Naive thymus-derived CD4-positive, alpha-beta T cell (primary cell): ENCODE measurements at regions of chr9 and their contacts with region 1.

Region 1: DNA sequence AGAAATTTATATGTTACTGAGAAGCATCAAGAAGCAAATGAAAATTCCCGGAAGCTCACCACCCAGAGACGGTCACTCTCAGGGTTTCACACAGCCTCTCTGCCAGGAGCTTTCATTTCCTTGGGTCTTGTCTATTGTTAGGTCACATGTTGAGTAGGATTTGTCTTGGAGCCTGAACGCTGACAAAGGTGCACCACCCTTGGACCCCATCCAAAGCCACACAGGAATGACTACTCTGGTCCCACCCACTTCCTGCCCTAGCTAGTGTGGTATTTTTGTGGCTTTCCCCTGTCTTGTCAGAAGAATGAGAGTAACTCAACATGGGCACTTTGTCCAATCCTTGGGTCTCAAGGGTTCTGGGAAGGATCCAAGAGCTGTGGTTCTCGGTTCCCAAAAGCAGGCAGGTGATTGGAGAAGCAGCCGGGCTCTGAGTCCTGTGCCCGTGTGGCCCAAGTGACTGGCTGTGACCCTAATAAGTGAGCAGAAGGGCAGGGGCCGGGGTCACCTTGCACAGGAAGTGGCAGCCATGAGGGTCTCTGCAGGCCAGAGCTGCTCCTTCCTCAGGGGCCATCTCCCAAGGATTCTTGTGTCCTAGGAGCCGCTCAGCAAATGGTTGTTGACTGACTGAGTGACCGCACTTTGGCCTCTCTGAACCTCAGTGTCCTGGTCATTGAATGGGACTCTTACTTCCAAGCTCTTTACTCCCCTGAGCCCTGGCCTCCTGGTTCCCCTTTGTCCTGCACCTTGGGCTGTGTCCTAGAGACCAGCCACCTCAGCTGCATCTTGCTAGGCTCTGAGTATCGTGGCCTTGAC is 6.9 kb downstream of the FGD3 start:
- DNase-seq: peak in 8 of 9 donors; percentile 67 to 92 (median 90)
- ATAC-seq: peak; percentile 93
- H3K4me3 ChIP-seq: peak overlapping the region; percentile 55
- H3K4me3 Mint-ChIP-seq: peak overlapping the region; percentile 79 to 99 (median 86)
- H3K27ac ChIP-seq: peak overlapping the region; percentile 84
- H3K27ac Mint-ChIP-seq: peak overlapping the region; percentile 91 to 100 (median 98)
- H3K4me1 ChIP-seq: peaks cover 52 to 88% of the 10 kb centered on the region in 2 donors
- H3K4me1 Mint-ChIP-seq: peaks cover 58 to 92% (median 84%) of the 10 kb centered on the region in 7 donors
- H3K27me3 ChIP-seq: no peaks in the 10 kb centered on the region
- H3K27me3 Mint-ChIP-seq: peaks cover 0 to 2% (median 0%) of the 10 kb centered on the region in 5 donors

Region 2: DNA sequence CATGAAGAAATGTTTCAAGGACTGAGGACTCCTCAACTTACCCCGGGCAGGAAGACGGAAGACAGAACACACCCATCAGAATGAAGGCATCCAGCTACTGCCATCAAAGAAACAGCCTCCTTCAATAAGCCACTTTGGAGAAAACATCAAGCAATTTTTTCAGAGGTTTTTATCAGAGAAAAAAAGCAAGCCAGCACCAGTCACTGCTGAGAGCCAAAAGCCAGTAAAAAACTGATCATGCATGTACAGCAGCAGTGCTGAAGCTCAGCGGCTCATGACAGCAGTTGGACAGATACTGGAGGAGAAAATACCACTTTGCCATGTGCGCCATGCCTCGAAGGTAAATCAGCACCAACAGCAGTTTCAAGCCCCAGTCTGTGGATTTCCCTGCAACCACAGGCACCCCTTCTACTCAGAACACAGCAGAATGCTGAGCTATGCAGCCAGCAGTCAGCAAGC is 66.3 kb before region 1 on chr9:
- CTCF ChIA-PET with region 1: interaction called, 4 read pairs
- POLR2A ChIA-PET with region 1: interaction called, 25 read pairs
- intact Hi-C with region 1: loop called in 1 of 2 experiments (anchors 2 kb)
- DNase-seq: peak in 7 of 9 donors; percentile 60 to 79 (median 67)
- ATAC-seq: peak; percentile 74
- H3K4me3 ChIP-seq: peak overlapping the region; percentile 29
- H3K4me3 Mint-ChIP-seq: peak overlapping the region; percentile 4 to 92 (median 77)
- H3K27ac ChIP-seq: peak overlapping the region; percentile 57
- H3K27ac Mint-ChIP-seq: peak overlapping the region; percentile 23 to 97 (median 92)
- H3K4me1 ChIP-seq: peaks cover 18 to 35% of the 10 kb centered on the region in 2 donors
- H3K4me1 Mint-ChIP-seq: peaks cover 21 to 86% (median 78%) of the 10 kb centered on the region in 7 donors
- H3K27me3 ChIP-seq: no peaks in the 10 kb centered on the region
- H3K27me3 Mint-ChIP-seq: peaks cover 0 to 6% (median 0%) of the 10 kb centered on the region in 5 donors

Region 3: GRCh38 chr9:93003552-93004407 is 49.5 kb after region 1 on chr9:
- CTCF ChIA-PET with region 1: interaction called, 17 read pairs
- POLR2A ChIA-PET with region 1: interaction called, 11 read pairs
- intact Hi-C with region 1: loop called (anchors 1 kb)
- DNase-seq: peak in 8 of 9 donors; percentile 55 to 77 (median 70)
- ATAC-seq: peak; percentile 88
- H3K4me3 ChIP-seq: peak overlapping the region; percentile 21
- H3K4me3 Mint-ChIP-seq: peak overlapping the region in 9 of 10 donors; percentile 54 to 72 (median 69)
- H3K27ac ChIP-seq: peak overlapping the region; percentile 56
- H3K27ac Mint-ChIP-seq: peak overlapping the region; percentile 81 to 98 (median 91)
- H3K4me1 ChIP-seq: peaks cover 47 to 60% of the 10 kb centered on the region in 2 donors
- H3K4me1 Mint-ChIP-seq: peaks cover 38 to 76% (median 67%) of the 10 kb centered on the region in 7 donors
- H3K27me3 ChIP-seq: no peaks in the 10 kb centered on the region
- H3K27me3 Mint-ChIP-seq: no peaks in the 10 kb centered on the region

Region 4: GRCh38 chr9:93058355-93059096 is 104.3 kb after region 1 on chr9 and contains the start of gene SUSD3:
- CTCF ChIA-PET with region 1: interaction called, 7 read pairs
- POLR2A ChIA-PET with region 1: interaction called, 11 read pairs
- intact Hi-C with region 1: no loop called
- DNase-seq: peak; percentile 47 to 82 (median 65)
- ATAC-seq: peak; percentile 81
- H3K4me3 ChIP-seq: peak within 1 kb of the TSS; percentile 90
- H3K4me3 Mint-ChIP-seq: peak within 1 kb of the TSS; percentile 93 to 97 (median 94)
- H3K27ac ChIP-seq: peak within 1 kb of the TSS; percentile 88
- H3K27ac Mint-ChIP-seq: peak within 1 kb of the TSS; percentile 97 to 100 (median 99)
- H3K4me1 ChIP-seq: peaks cover 52 to 56% of the 10 kb centered on the region in 2 donors
- H3K4me1 Mint-ChIP-seq: peaks cover 31 to 78% (median 65%) of the 10 kb centered on the region in 7 donors
- H3K27me3 ChIP-seq: no peaks in the 10 kb centered on the region
- H3K27me3 Mint-ChIP-seq: no peaks in the 10 kb centered on the region
- total RNA-seq, gene SUSD3: 62.8 to 83.5 (median 68.7) TPM

Region 5: DNA sequence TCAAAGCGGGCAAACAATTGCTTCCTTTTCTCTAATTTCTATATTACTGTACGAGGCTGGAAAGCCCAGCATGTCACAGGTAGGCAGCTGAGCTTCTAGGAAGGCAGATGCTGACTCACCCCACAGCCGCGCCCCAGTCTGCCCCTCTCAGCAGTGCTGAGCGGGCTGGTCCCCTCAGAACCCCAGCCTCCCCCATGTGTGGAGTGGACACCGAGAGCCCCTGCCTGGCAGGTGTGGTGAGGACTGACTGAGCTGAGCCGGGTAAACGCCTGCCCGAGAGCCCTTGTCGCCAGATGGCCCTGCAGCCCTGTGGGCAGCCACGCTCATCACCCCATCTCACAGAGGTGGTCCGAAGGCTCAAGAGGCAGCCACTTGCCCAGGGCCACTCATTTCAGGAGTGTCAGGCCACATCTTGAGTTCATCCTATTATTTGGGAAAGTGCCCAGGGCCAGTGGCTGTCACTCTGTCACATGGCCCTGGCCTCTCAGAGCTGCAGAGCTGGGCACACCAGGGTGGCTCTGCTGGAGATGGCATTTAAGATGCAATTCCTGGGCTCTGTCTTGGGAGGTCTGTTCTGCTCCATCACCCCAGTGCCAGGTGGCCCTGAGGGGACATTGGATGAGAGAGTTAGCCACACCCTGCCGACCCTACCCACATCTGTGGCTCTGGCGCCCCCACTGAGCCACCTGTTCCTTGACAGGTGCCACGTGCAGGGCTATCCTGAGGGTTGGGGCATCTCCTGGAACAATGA is 154.2 kb after region 1 on chr9:
- CTCF ChIA-PET with region 1: interaction called, 7 read pairs
- POLR2A ChIA-PET with region 1: interaction called, 4 read pairs
- intact Hi-C with region 1: loop called in 1 of 2 experiments (anchors 1 kb)
- DNase-seq: peak in 2 of 9 donors; percentile 6 to 59
- ATAC-seq: no peak
- H3K4me3 ChIP-seq: no peak overlapping the region
- H3K4me3 Mint-ChIP-seq: peak overlapping the region in 2 of 10 donors; percentile 39 to 56
- H3K27ac ChIP-seq: peak overlapping the region; percentile 10
- H3K27ac Mint-ChIP-seq: peak overlapping the region in 8 of 9 donors; percentile 38 to 82 (median 62)
- H3K4me1 ChIP-seq: peaks cover 15 to 34% of the 10 kb centered on the region in 2 donors
- H3K4me1 Mint-ChIP-seq: peaks cover 34 to 53% (median 48%) of the 10 kb centered on the region in 7 donors
- H3K27me3 ChIP-seq: no peaks in the 10 kb centered on the region
- H3K27me3 Mint-ChIP-seq: no peaks in the 10 kb centered on the region

Region 6: GRCh38 chr9:93453047-93453914 is 499.0 kb after region 1 on chr9 and contains the start of gene FAM120AOS:
- CTCF ChIA-PET with region 1: no interaction called
- POLR2A ChIA-PET with region 1: interaction called, 11 read pairs
- intact Hi-C with region 1: no loop called
- DNase-seq: peak; percentile 50 to 85 (median 76)
- ATAC-seq: peak; percentile 82
- H3K4me3 ChIP-seq: peak within 1 kb of the TSS; percentile 72
- H3K4me3 Mint-ChIP-seq: peak within 1 kb of the TSS; percentile 89 to 100 (median 95)
- H3K27ac ChIP-seq: peak within 1 kb of the TSS; percentile 87
- H3K27ac Mint-ChIP-seq: peak within 1 kb of the TSS; percentile 83 to 96 (median 94)
- H3K4me1 ChIP-seq: peaks cover 31 to 50% of the 10 kb centered on the region in 2 donors
- H3K4me1 Mint-ChIP-seq: peaks cover 39 to 69% (median 57%) of the 10 kb centered on the region in 7 donors
- H3K27me3 ChIP-seq: no peaks in the 10 kb centered on the region
- H3K27me3 Mint-ChIP-seq: no peaks in the 10 kb centered on the region
- total RNA-seq, gene FAM120AOS: 36.7 to 49.5 (median 42.3) TPM